Gastrocnemius medialis (tissue), 4 donors: ENCODE measurements at regions of chr2 and their contacts with region 1.

Region 1: GRCh38 chr2:8004250-8004681 is 677.6 kb upstream of the ID2 start:
- DNase-seq: peak; percentile 40 to 57
- ATAC-seq: peak; percentile 85 to 89
- H3K4me3 ChIP-seq: no peak overlapping the region
- H3K27ac ChIP-seq: peak overlapping the region; percentile 71 to 91 (median 74)
- H3K4me1 ChIP-seq: peaks cover 9 to 12% of the 10 kb centered on the region in 2 donors
- H3K27me3 ChIP-seq: no peaks in the 10 kb centered on the region
- CTCF ChIP-seq: no peak
- POLR2A ChIP-seq: no peak

Region 2: DNA sequence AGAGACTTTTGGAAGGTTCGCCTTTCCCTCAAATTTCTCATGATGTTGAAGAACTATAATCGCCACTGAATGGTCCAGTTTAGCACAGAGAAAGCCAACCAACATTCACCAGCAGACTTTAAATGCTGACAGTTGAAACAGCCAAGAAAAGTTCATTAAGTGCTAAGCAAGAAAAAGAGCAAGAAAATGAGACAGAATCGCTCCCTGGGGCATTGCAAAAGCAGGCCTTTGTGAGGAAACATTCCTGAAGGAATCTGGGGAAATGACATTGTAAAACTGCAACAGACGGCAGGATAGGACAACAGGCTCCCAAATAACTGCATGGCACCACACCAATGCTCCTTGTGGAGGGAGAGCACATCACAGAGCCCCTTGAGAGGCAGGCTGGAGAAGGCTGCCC is 408.3 kb after region 1 on chr2:
- in situ Hi-C with region 1: no loop called
- intact Hi-C with region 1: loop called (anchors 5 kb)
- DNase-seq: peak; percentile 18 to 53
- ATAC-seq: peak in 1 of 2 donors; percentile 35
- H3K4me3 ChIP-seq: no peak overlapping the region
- H3K27ac ChIP-seq: peak overlapping the region in 2 of 4 donors; percentile 11 to 41
- H3K4me1 ChIP-seq: peaks cover 17% of the 10 kb centered on the region in 2 donors
- H3K27me3 ChIP-seq: no peaks in the 10 kb centered on the region
- CTCF ChIP-seq: no peak
- POLR2A ChIP-seq: no peak

Region 3: DNA sequence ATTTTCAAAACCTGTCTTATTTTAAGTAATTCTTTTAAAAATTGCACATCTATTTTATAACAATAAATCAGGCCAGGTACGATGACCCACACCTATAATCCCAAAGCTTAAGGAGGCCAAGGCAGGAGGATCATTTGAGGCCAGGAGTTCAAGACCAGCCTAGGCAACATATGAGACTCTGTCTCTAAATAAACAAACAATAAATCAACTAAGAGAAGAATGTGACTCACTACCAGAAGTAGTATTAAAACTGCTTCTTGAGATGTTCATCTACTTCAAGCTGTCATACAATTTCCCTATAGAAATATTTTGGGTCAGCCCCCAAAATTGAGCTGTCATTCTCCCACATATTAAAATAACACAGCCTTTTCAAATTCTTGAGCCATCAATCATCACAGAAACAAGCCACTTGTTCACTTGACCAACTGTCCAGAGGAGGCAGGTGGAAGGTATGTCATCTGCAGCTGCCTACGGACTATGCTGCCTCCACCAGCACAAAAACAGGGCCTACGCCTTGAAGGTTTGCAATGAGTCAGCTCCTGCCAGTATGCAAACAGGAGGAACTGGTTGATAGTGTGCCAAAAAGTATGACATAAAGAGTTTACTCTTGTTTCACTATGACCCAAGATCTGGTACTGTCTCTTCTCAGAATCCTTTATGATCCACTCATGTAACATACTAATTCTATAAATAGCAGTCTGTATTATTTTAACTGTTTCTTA is 799.6 kb after region 1 on chr2:
- in situ Hi-C with region 1: no loop called
- intact Hi-C with region 1: loop called (anchors 5 kb)
- DNase-seq: peak; percentile 84 to 92
- ATAC-seq: peak; percentile 98
- H3K4me3 ChIP-seq: no peak overlapping the region
- H3K27ac ChIP-seq: peak overlapping the region; percentile 82 to 90 (median 88)
- H3K4me1 ChIP-seq: peaks cover 28 to 31% of the 10 kb centered on the region in 2 donors
- H3K27me3 ChIP-seq: no peaks in the 10 kb centered on the region
- CTCF ChIP-seq: peak in 3 of 5 experiments; percentile 11 to 31 (median 28)
- POLR2A ChIP-seq: no peak

Region 4: DNA sequence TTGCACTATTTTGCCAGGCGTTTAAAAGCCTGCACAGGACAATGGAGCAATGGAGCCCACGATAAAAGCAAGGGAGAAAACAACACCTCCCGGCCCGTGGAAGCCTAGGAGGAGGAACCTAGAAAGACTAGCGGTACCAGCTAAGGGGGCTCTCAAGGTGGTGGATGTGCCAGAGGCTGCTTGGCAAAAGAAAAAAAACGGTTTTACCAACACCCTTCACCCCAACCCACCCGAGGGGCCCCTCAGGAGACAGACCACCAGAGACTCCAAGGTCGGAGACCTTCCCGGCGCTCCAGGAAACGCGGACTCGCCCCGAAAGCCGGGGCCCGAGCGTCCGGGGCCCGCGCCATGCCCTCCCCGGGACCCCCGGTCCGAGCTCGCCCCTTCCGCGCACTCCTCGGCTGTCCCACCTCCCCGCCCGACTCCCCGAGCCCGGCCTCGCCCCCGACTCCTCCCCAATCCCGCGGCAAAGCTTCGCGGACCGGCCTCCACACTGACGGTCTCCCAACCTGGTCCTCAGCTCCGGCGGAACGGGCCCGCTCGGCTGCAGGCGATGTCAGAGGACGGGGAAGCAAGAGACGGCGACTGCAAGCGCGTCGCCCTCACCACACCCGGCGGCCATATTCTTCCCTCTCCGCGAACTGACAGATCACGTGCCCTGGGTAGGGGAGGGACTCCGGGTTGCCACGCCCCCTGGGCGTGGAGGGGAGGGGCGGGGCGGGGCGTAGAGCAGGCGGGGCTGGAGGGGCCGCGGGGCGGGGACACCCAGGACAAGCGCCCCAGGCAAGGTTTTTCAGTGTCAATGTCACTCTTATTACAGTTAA is 832.9 kb after region 1 on chr2 and contains the start of gene KIDINS220:
- in situ Hi-C with region 1: no loop called
- intact Hi-C with region 1: loop called (anchors 10 kb)
- DNase-seq: peak; percentile 78 to 80
- ATAC-seq: peak; percentile 93 to 95
- H3K4me3 ChIP-seq: peak within 1 kb of the TSS; percentile 95 to 97 (median 96)
- H3K27ac ChIP-seq: peak within 1 kb of the TSS; percentile 88 to 97 (median 93)
- H3K4me1 ChIP-seq: peaks cover 29 to 38% of the 10 kb centered on the region in 2 donors
- H3K27me3 ChIP-seq: no peaks in the 10 kb centered on the region
- CTCF ChIP-seq: no peak
- POLR2A ChIP-seq: peak; percentile 85 to 94
- total RNA-seq, gene KIDINS220: 57.8 to 78.9 (median 59.1) TPM